ENCODE measurements at regions of chr17 and their contacts with region 1.

Region 1: GRCh38 chr17:81101614-81102306 is 63.5 kb upstream of the PVALEF start:
- DNase-seq: peak; percentile 88 to 98
- ATAC-seq: peak; percentile 67 to 91
- H3K4me3 ChIP-seq: no peak overlapping the region
- H3K27ac ChIP-seq: no peak overlapping the region; a peak in 1 of 6 replicates
- H3K4me1 ChIP-seq: peaks cover 24% of the 10 kb centered on the region
- CTCF ChIP-seq: peak; percentile 100
- EP300 ChIP-seq: no peak
- POLR2A ChIP-seq: no peak
- RAD21 ChIP-seq: peak; percentile 92 to 95

Region 2: DNA sequence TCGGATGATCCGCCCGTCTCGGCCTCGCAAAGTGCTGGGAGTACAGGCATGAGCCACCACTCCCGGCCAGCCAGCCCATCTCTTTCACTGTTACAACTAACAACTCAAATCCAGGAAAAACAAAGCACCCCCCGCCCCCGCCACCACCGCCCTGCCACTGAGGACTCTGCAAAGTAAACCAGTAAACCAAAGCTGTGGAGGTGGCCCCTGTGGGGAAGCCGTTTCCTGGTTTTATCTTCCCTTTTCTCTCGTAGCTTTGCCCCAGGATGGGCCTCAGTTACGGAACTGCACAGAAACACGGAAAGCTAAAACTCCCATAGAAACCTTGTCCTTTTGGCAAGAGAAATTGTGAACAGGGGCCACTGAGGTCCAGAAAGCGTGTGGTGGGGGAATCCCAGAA is 92.6 kb before region 1 on chr17:
- CTCF ChIA-PET with region 1: interaction called, 10 read pairs
- POLR2A ChIA-PET with region 1: no interaction called
- DNase-seq: no peak
- ATAC-seq: no peak
- H3K4me3 ChIP-seq: no peak overlapping the region
- H3K27ac ChIP-seq: no peak overlapping the region
- H3K4me1 ChIP-seq: peaks cover 5% of the 10 kb centered on the region; the same call in 2 of the 3 replicates
- CTCF ChIP-seq: no peak
- EP300 ChIP-seq: no peak
- POLR2A ChIP-seq: no peak
- RAD21 ChIP-seq: no peak

Region 3: GRCh38 chr17:81034779-81035388 is 66.9 kb before region 1 on chr17 and contains the start of gene BAIAP2:
- CTCF ChIA-PET with region 1: interaction called, 880 read pairs
- POLR2A ChIA-PET with region 1: no interaction called
- DNase-seq: peak; percentile 95 to 100
- ATAC-seq: peak; percentile 73 to 88
- H3K4me3 ChIP-seq: peak within 1 kb of the TSS; percentile 72
- H3K27ac ChIP-seq: peak within 1 kb of the TSS; percentile 72 to 90
- H3K4me1 ChIP-seq: peaks cover 19% of the 10 kb centered on the region
- CTCF ChIP-seq: peak; percentile 36
- EP300 ChIP-seq: no peak
- POLR2A ChIP-seq: peak; percentile 100
- RAD21 ChIP-seq: no peak; a peak in 1 of 5 replicates
- polyA plus RNA-seq, gene BAIAP2: 7.1 and 8.6 TPM in 2 replicates

Region 4: GRCh38 chr17:81076141-81076679 is 25.6 kb before region 1 on chr17:
- CTCF ChIA-PET with region 1: interaction called, 23 read pairs
- POLR2A ChIA-PET with region 1: no interaction called
- DNase-seq: no peak
- ATAC-seq: no peak
- H3K4me3 ChIP-seq: no peak overlapping the region
- H3K27ac ChIP-seq: no peak overlapping the region
- H3K4me1 ChIP-seq: peaks cover 5% of the 10 kb centered on the region; the same call in 1 of the 3 replicates
- CTCF ChIP-seq: no peak
- EP300 ChIP-seq: no peak
- POLR2A ChIP-seq: no peak
- RAD21 ChIP-seq: no peak

Region 5: DNA sequence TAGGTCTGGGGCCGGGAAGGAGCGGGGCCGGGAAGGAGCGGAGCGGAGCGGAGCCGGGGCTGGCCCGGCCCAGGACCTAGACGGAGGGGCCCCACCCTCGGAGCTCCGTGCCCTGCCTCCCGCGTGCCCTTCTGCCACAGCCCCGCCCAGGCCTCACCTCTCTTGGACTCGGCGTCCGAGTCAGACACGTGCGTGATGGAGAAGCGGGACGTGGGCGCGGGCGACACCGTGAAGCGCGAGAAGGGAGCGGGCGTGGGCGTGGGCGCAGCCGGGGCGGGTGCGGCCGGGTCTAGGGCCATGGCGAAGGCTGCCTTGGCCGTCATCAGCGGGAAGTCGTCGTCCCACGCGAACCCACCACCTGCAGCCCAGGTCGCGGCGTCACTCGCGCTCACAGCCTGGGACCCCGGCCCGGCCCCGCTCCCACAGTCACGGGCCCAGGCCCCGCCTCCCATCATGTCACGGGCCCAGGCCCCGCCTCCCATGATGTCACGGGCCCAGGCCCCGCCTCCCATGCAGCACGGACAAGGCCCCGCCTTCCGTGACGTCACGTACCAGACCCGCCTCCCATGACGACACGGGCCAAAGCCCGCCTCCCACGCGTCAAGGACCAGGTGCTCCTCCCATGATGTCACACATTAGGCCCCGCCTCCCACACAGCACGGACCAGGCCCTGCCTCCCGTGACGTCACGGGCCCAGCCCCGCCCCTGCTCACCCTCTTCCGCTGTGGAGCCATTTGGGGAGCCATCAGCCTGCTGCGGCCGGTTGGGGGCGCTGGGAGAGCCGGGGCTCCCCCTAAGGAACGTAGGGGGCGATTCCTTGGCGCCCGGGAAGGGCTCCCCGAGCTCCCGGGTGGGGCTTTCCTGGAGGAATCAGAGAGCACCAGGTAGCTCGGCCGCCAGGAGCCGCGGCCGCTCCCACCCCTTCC is 17.7 kb after region 1 on chr17:
- CTCF ChIA-PET with region 1: interaction called, 131 read pairs
- POLR2A ChIA-PET with region 1: no interaction called
- DNase-seq: peak; percentile 94 to 100
- ATAC-seq: peak; percentile 38 to 77
- H3K4me3 ChIP-seq: peak overlapping the region; percentile 56
- H3K27ac ChIP-seq: peak overlapping the region; percentile 55 to 84; a peak in 5 of 6 replicates
- H3K4me1 ChIP-seq: peaks cover 8% of the 10 kb centered on the region; the same call in 2 of the 3 replicates
- CTCF ChIP-seq: peak; percentile 48
- EP300 ChIP-seq: no peak
- POLR2A ChIP-seq: no peak
- RAD21 ChIP-seq: no peak

Region 6: GRCh38 chr17:81270279-81270678 is 168.5 kb after region 1 on chr17:
- CTCF ChIA-PET with region 1: no interaction called
- POLR2A ChIA-PET with region 1: no interaction called
- DNase-seq: no peak
- ATAC-seq: no peak
- H3K4me3 ChIP-seq: no peak overlapping the region
- H3K27ac ChIP-seq: no peak overlapping the region
- H3K4me1 ChIP-seq: no peaks in the 10 kb centered on the region
- CTCF ChIP-seq: no peak
- EP300 ChIP-seq: no peak
- POLR2A ChIP-seq: no peak
- RAD21 ChIP-seq: no peak

Measured in A549 (cell line).